CD14-positive monocyte (primary cell): ENCODE measurements at regions of chr7 and their contacts with region 1.

Region 1: GRCh38 chr7:44044315-44045225 is at the start of gene DBNL:
- DNase-seq: peak; percentile 90 to 92 (median 91)
- H3K4me3 ChIP-seq: peak within 1 kb of the TSS; percentile 58 to 80 (median 72)
- H3K4me3 Mint-ChIP-seq: peak within 1 kb of the TSS; percentile 84 to 90
- H3K27ac ChIP-seq: peak within 1 kb of the TSS; percentile 94 to 97
- H3K27ac Mint-ChIP-seq: peak within 1 kb of the TSS; percentile 99 to 100 (median 99)
- H3K4me1 ChIP-seq: peaks cover 53 to 67% of the 10 kb centered on the region in 2 donors
- H3K4me1 Mint-ChIP-seq: peaks cover 44% of the 10 kb centered on the region
- H3K27me3 ChIP-seq: no peaks in the 10 kb centered on the region
- H3K27me3 Mint-ChIP-seq: peaks cover 0 to 4% (median 0%) of the 10 kb centered on the region in 3 donors
- CTCF ChIP-seq: no peak
- polyA plus RNA-seq, gene DBNL: 228 to 321 (median 304) TPM

Region 2: GRCh38 chr7:43942997-43943704 is 101.4 kb before region 1 on chr7:
- intact Hi-C with region 1: no loop called
- DNase-seq: no peak
- H3K4me3 ChIP-seq: no peak overlapping the region
- H3K4me3 Mint-ChIP-seq: no peak overlapping the region
- H3K27ac ChIP-seq: no peak overlapping the region
- H3K27ac Mint-ChIP-seq: peak overlapping the region in 1 of 7 donors; percentile 59
- H3K4me1 ChIP-seq: no peaks in the 10 kb centered on the region
- H3K4me1 Mint-ChIP-seq: no peaks in the 10 kb centered on the region
- H3K27me3 ChIP-seq: no peaks in the 10 kb centered on the region
- H3K27me3 Mint-ChIP-seq: peaks cover 0 to 4% (median 1%) of the 10 kb centered on the region in 3 donors
- CTCF ChIP-seq: no peak

Region 3: DNA sequence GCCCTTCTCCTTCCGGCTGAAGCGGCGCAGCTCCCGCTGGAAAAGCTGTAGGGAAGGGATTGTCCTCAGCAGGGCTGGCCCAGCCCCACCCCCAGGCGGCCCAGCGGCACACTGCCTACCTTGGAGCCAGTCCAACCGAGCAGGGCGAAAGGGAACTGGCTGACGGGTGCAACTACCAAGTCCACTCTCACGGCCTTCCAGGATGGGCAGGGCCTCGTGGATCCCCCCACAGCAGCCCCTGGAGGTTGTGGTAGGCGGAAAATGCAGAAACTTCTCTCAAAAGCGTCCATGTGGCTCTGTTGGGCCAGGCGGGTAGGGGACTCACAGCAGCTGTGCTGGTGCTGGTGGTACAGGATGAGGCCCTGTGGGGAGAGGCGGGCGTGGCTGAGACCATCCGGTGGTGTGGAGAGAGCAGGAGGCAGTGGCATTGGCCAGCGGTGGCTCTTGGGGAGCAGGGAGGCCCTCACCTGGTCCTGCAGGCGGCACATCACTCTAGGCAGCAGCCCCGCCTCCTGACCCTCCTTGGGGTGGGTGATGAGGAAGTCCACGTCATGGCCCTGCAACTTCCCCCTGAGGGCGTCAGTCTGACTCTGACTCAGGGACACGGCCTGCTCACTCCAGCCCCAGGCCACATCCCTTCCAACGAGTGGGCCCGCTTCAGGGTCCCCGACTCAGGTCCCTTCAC is 29.2 kb after region 1 on chr7:
- intact Hi-C with region 1: loop called in 1 of 2 experiments (anchors 2 kb)
- DNase-seq: peak; percentile 95 to 97 (median 96)
- H3K4me3 ChIP-seq: peak overlapping the region in 1 of 3 experiments; percentile 58
- H3K4me3 Mint-ChIP-seq: peak overlapping the region; percentile 79 to 80
- H3K27ac ChIP-seq: peak overlapping the region; percentile 90 to 97
- H3K27ac Mint-ChIP-seq: peak overlapping the region; percentile 95 to 99 (median 98)
- H3K4me1 ChIP-seq: peaks cover 18 to 27% of the 10 kb centered on the region in 2 donors
- H3K4me1 Mint-ChIP-seq: peaks cover 40% of the 10 kb centered on the region
- H3K27me3 ChIP-seq: no peaks in the 10 kb centered on the region
- H3K27me3 Mint-ChIP-seq: peaks cover 0 to 4% (median 0%) of the 10 kb centered on the region in 3 donors
- CTCF ChIP-seq: no peak